ENCODE measurements at regions of chr3 and their contacts with region 1.

Region 1: GRCh38 chr3:37956723-37957528 is 33.7 kb upstream of the VILL start:
- DNase-seq: peak; percentile 84
- H3K4me3 ChIP-seq: no peak overlapping the region
- H3K27ac ChIP-seq: peak overlapping the region; percentile 41
- H3K4me1 ChIP-seq: peaks cover 40% of the 10 kb centered on the region
- H3K27me3 ChIP-seq: no peaks in the 10 kb centered on the region
- CTCF ChIP-seq: no peak
- POLR2A ChIP-seq: no peak

Region 2: GRCh38 chr3:37945807-37946530 is 11.0 kb before region 1 on chr3:
- CTCF ChIA-PET with region 1: interaction called, 13 read pairs
- POLR2A ChIA-PET with region 1: no interaction called
- dilution Hi-C with region 1: no loop called
- intact Hi-C with region 1: loop called (anchors 1 kb)
- DNase-seq: peak; percentile 87
- H3K4me3 ChIP-seq: no peak overlapping the region
- H3K27ac ChIP-seq: peak overlapping the region; percentile 16
- H3K4me1 ChIP-seq: peaks cover 27% of the 10 kb centered on the region
- H3K27me3 ChIP-seq: no peaks in the 10 kb centered on the region
- CTCF ChIP-seq: no peak
- POLR2A ChIP-seq: peak; percentile 35

Region 3: DNA sequence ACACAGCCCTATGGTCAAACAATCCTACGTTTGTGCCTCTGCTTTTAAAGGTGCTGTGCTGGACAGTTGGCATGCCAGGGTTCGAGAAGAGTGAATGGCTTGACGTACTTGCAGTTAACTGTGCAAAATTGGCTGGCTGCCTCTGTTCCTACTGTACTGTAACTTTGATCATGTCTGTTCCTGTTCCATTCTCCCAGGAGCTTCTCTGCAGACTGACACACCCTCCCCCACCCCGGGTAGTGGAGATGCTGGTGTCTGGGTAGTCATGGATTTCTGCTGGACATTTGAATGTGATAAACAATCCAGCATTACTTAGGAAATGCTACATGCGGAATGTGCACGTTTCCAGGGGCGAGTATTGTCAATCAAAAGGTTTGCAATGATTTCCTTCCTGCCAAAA is 27.1 kb after region 1 on chr3:
- CTCF ChIA-PET with region 1: no interaction called
- POLR2A ChIA-PET with region 1: no interaction called
- dilution Hi-C with region 1: no loop called
- intact Hi-C with region 1: no loop called
- DNase-seq: no peak
- H3K4me3 ChIP-seq: no peak overlapping the region
- H3K27ac ChIP-seq: no peak overlapping the region
- H3K4me1 ChIP-seq: no peaks in the 10 kb centered on the region
- H3K27me3 ChIP-seq: no peaks in the 10 kb centered on the region
- CTCF ChIP-seq: no peak
- POLR2A ChIP-seq: no peak

Measured in endothelial cell of umbilical vein (primary cell).